ENCODE measurements at regions of chr2 and their contacts with region 1.

Region 1: DNA sequence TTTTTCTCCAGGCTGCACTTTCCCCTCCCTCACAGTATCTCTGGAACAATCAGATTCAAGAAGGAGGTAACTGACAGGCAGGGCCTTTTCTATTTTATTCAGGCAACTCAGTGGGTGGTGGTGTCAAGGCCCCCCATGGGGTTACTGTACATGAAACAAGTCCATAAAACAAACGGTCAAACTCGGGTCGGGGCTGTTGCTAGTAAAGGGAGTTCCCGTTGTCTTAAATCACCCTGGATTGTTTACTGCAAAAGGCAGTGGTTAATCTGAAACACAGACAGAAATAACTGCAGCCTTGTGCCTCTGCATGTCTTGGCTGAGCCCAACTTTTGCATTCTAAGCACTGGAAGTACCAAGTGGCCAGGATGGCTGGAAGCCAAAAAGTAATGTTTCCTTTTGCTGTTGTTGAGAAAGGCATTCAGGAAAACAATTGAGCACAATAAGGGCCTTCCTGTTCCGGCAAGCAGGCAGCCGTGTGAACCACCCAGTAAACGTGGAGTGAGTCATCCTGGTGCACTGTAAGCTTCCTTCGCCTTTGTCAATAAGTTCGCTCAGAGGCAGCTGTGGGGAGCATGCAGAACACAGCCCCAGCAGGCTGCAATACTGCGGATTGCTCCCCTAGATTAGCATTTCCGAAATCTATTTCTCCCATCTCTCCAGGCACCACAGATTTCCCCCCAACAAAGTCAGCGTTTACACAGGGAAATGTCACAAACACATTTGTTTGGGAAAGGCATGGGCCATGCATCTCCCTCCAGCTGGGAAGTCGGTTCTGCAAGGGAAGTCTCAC is 149.6 kb downstream of the IRS1 start:
- DNase-seq: peak; percentile 80 to 88
- H3K4me3 ChIP-seq: no peak overlapping the region
- H3K27ac ChIP-seq: peak overlapping the region; percentile 92
- H3K4me1 ChIP-seq: peaks cover 45% of the 10 kb centered on the region
- H3K27me3 ChIP-seq: no peaks in the 10 kb centered on the region
- CTCF ChIP-seq: no peak

Region 2: DNA sequence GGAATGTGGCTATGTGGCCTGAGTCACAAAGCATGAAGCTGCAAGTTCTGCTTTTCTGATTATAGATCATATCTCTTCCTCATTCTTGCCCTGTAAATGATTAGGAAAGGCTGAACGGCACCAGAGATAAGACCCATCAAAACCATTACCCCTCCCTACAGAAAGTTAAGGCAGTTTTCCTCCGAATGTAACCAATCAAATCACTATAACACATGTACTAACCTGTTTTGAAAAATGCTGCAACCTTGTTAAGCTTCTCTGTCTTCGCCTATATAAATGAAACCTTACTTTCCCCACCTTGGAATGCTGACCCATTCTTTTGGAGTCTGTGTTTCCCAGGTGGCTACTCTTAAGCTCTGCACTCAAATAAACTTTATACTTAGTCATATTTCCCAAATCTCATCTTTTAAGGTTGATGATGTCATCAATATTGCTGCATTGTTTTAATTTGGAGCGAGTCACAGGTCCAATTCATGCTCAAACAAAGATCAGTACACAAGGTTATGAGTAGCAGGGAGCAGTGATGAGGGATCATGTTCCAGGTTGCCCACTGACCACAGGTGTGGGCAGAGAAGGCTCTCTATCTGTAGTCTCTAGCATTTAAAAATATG is 512.8 kb before region 1 on chr2:
- CTCF ChIA-PET with region 1: no interaction called
- POLR2A ChIA-PET with region 1: no interaction called
- intact Hi-C with region 1: loop called (anchors 1 kb)
- DNase-seq: peak; percentile 21 to 72
- H3K4me3 ChIP-seq: no peak overlapping the region
- H3K27ac ChIP-seq: peak overlapping the region; percentile 58
- H3K4me1 ChIP-seq: peaks cover 23% of the 10 kb centered on the region
- H3K27me3 ChIP-seq: no peaks in the 10 kb centered on the region
- CTCF ChIP-seq: no peak

Region 3: GRCh38 chr2:226247289-226248275 is 402.5 kb before region 1 on chr2:
- CTCF ChIA-PET with region 1: no interaction called
- POLR2A ChIA-PET with region 1: no interaction called
- intact Hi-C with region 1: loop called (anchors 5 kb)
- DNase-seq: peak in 1 of 2 experiments; percentile 74
- H3K4me3 ChIP-seq: no peak overlapping the region
- H3K27ac ChIP-seq: peak overlapping the region; percentile 45
- H3K4me1 ChIP-seq: peaks cover 19% of the 10 kb centered on the region
- H3K27me3 ChIP-seq: no peaks in the 10 kb centered on the region
- CTCF ChIP-seq: no peak

Region 4: GRCh38 chr2:226423498-226423960 is 226.5 kb before region 1 on chr2:
- CTCF ChIA-PET with region 1: no interaction called
- POLR2A ChIA-PET with region 1: no interaction called
- intact Hi-C with region 1: loop called (anchors 2 kb)
- DNase-seq: peak in 1 of 2 experiments; percentile 41
- H3K4me3 ChIP-seq: no peak overlapping the region
- H3K27ac ChIP-seq: no peak overlapping the region
- H3K4me1 ChIP-seq: peaks cover 31% of the 10 kb centered on the region
- H3K27me3 ChIP-seq: no peaks in the 10 kb centered on the region
- CTCF ChIP-seq: no peak

Region 5: GRCh38 chr2:226673314-226673723 is 23.3 kb after region 1 on chr2:
- CTCF ChIA-PET with region 1: no interaction called
- POLR2A ChIA-PET with region 1: no interaction called
- intact Hi-C with region 1: loop called (anchors 1 kb)
- DNase-seq: peak; percentile 92 to 97
- H3K4me3 ChIP-seq: no peak overlapping the region
- H3K27ac ChIP-seq: peak overlapping the region; percentile 66
- H3K4me1 ChIP-seq: peaks cover 34% of the 10 kb centered on the region
- H3K27me3 ChIP-seq: no peaks in the 10 kb centered on the region
- CTCF ChIP-seq: no peak

Region 6: DNA sequence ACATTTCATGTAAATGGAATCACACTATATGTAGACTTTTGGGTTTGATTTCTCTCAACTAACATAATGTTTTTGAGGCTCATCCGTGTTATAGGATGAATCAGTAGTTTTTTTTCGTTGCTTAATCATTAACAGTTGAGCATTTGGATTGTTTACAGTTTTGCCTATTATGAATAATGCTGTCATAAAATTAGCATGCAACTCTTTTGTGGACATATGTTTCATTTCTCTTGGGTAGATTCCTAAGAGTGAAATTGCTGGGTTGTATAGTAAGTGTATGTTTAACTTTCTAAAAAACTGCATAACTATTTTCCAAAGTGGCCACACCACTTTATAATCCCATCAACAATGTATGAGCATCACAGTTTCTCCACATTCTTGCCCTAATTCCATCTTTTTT is 178.1 kb after region 1 on chr2:
- CTCF ChIA-PET with region 1: no interaction called
- POLR2A ChIA-PET with region 1: no interaction called
- intact Hi-C with region 1: no loop called
- DNase-seq: no peak
- H3K4me3 ChIP-seq: no peak overlapping the region
- H3K27ac ChIP-seq: no peak overlapping the region
- H3K4me1 ChIP-seq: peaks cover under 1% of the 10 kb centered on the region
- H3K27me3 ChIP-seq: no peaks in the 10 kb centered on the region
- CTCF ChIP-seq: no peak

Measured in PC-9 (cell line).